BJ (cell line): ENCODE measurements at regions of chr10 and their contacts with region 1.

Region 1: DNA sequence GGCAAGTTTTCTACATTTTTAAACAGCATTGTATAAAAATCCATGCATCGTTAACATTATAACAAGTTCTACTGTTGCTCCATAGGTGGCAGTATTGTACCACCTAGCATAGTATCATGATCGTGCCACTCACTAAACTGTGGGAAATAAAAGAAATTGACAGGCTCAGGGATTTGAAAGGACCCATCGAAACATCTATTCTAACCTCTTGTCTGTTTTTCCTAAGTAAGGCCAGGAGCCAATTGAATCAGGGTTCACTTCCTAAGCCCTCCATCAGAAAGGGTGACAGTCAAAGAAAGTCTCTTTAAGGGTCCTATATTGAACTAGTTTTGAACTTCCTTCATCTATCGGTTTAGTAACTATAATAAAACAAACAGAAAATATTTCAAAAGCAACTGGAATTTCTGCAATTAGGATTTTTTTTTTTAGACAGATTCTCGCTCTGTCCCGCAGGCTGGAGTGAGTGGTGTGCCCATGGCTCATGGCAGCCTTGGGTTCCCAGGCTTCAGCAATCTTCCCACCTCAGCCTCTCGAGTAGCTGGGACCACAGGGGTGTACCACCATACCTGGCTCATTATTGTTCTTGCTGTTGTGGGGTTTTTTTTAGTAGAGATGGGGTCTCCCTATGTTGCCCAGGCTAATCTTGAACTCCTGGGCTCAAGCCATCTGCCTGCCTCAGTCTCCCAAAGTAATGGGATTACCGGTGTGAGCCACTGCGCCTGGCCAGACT is 9.4 kb downstream of the HACD1 start:
- DNase-seq: no peak
- H3K4me3 ChIP-seq: no peak overlapping the region
- H3K27me3 ChIP-seq: no peaks in the 10 kb centered on the region
- CTCF ChIP-seq: peak; percentile 79

Region 2: GRCh38 chr10:17474595-17475323 is 133.0 kb before region 1 on chr10:
- CTCF ChIA-PET with region 1: no interaction called
- POLR2A ChIA-PET with region 1: no interaction called
- DNase-seq: no peak
- H3K4me3 ChIP-seq: no peak overlapping the region
- H3K27me3 ChIP-seq: no peaks in the 10 kb centered on the region
- CTCF ChIP-seq: peak; percentile 22; the same call in 1 of the 2 replicates

Region 3: DNA sequence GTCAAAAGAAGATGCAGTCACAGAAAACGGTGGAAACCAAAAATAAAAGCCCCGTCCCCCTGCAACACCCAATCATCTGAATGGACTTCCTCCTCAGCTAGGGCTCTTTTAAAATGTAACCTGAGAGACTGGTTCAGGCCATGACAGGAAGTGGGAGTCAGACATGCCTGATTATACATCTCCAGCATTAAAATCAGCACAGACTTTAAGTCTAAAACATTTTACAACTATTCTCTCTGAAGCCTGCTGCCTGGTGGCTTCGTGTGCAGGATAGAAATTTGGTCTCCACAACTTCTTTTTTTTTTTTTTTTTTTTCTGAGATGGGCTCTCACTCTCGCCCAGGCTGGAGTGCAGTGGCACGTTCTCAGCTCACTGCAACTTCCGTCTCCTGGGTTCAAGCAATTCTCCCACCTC is 20.9 kb before region 1 on chr10:
- CTCF ChIA-PET with region 1: interaction called, 11 read pairs
- POLR2A ChIA-PET with region 1: no interaction called
- DNase-seq: no peak
- H3K4me3 ChIP-seq: no peak overlapping the region
- H3K27me3 ChIP-seq: no peaks in the 10 kb centered on the region
- CTCF ChIP-seq: no peak

Region 4: DNA sequence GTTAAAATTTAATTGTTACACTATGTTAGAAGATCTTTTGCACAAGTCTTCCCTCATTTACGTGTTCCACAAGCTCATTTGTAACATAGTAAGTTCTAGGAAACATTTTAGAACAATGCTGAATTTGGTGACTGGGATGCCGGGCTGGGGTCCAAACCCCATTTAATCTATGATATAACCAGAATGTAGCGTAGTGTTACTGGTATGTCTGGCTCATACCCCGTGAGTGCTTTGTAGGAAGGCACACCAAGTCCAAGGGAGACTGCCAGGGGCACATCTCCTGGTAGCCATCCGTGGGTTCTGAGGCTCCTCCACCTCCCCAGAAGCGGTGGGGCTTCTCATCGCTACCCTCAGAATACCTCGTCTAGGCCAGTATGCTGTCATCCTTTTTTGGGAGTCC is 122.9 kb after region 1 on chr10:
- CTCF ChIA-PET with region 1: interaction called, 3 read pairs
- POLR2A ChIA-PET with region 1: interaction called, 28 read pairs
- DNase-seq: no peak
- H3K4me3 ChIP-seq: no peak overlapping the region
- H3K27me3 ChIP-seq: no peaks in the 10 kb centered on the region
- CTCF ChIP-seq: no peak

Region 5: GRCh38 chr10:17744341-17744861 is 136.6 kb after region 1 on chr10:
- CTCF ChIA-PET with region 1: interaction called, 12 read pairs
- POLR2A ChIA-PET with region 1: no interaction called
- DNase-seq: no peak
- H3K4me3 ChIP-seq: no peak overlapping the region
- H3K27me3 ChIP-seq: no peaks in the 10 kb centered on the region
- CTCF ChIP-seq: no peak

Region 6: GRCh38 chr10:17872191-17873091 is 264.7 kb after region 1 on chr10:
- CTCF ChIA-PET with region 1: interaction called, 14 read pairs
- POLR2A ChIA-PET with region 1: interaction called, 4 read pairs
- DNase-seq: no peak
- H3K4me3 ChIP-seq: no peak overlapping the region
- H3K27me3 ChIP-seq: no peaks in the 10 kb centered on the region
- CTCF ChIP-seq: peak; percentile 48

Region 7: GRCh38 chr10:17883621-17884020 is 275.9 kb after region 1 on chr10:
- CTCF ChIA-PET with region 1: no interaction called
- POLR2A ChIA-PET with region 1: no interaction called
- DNase-seq: no peak
- H3K4me3 ChIP-seq: no peak overlapping the region
- H3K27me3 ChIP-seq: no peaks in the 10 kb centered on the region
- CTCF ChIP-seq: no peak